PC-9 (cell line): ENCODE measurements at regions of chr15 and their contacts with region 1.

Region 1: GRCh38 chr15:96330450-96331145 is at the start of gene NR2F2:
- DNase-seq: peak; percentile 93
- H3K4me3 ChIP-seq: peak within 1 kb of the TSS; percentile 90
- H3K27ac ChIP-seq: peak within 1 kb of the TSS; percentile 91
- H3K4me1 ChIP-seq: peaks cover 36% of the 10 kb centered on the region
- H3K27me3 ChIP-seq: no peaks in the 10 kb centered on the region
- CTCF ChIP-seq: no peak
- total RNA-seq, gene NR2F2: 48.4 and 72.1 TPM in 2 replicates

Region 2: DNA sequence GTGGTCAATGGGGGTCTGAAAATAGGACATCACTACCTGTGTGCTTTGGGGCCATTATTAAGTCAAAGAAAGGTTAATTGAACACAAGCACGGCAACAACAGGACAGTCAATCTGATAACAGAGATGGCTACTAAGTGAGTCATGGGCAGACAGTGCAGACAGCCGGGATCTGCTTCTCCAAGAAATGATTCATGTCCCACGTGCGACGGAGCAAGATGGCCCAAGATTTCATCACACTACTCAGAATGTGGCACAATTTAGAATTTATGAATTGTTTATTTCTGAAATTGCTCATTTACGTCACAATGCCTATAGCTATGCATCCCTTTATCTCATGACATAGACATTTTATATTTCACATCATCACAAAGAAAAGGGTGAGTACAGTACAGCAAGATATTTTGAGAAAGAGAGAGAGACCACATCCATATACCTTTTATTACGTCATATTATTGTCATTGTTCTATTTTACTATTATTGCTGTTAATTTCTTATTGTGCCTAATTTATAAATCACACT is 770.7 kb before region 1 on chr15:
- CTCF ChIA-PET with region 1: interaction called, 4 read pairs
- POLR2A ChIA-PET with region 1: no interaction called
- intact Hi-C with region 1: loop called (anchors 5 kb)
- DNase-seq: peak; percentile 28 to 69
- H3K4me3 ChIP-seq: no peak overlapping the region
- H3K27ac ChIP-seq: peak overlapping the region; percentile 82
- H3K4me1 ChIP-seq: peaks cover 38% of the 10 kb centered on the region
- H3K27me3 ChIP-seq: no peaks in the 10 kb centered on the region
- CTCF ChIP-seq: no peak

Region 3: DNA sequence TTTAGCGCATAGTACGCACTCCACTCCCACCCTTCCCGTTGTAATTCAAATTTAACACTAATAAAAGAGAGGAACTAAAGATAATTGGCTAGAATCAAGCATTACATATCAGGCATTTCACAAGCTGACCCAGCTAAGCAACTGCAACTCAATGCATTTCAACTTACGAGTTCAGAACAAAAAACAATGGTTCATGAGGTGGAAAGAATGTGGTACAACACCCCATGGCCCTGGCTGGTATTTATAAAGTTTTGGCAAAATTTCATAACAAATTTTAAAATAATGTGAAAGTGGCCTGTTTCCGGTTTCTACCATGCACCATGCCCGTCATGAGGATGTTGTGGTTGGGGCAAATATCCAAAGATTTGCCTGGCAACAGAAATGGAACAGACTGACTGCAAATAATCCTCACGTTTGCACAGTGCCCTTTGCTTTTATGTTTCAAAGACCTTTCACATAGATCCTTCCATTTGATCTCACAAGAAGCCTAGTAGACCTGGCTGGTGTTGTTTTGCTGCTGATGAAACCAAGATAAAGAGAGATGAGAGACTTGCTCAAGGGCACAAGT is 455.4 kb before region 1 on chr15:
- CTCF ChIA-PET with region 1: interaction called, 6 read pairs
- POLR2A ChIA-PET with region 1: interaction called, 23 read pairs
- intact Hi-C with region 1: loop called (anchors 1 kb)
- DNase-seq: peak; percentile 63 to 79
- H3K4me3 ChIP-seq: no peak overlapping the region
- H3K27ac ChIP-seq: peak overlapping the region; percentile 25
- H3K4me1 ChIP-seq: peaks cover 37% of the 10 kb centered on the region
- H3K27me3 ChIP-seq: no peaks in the 10 kb centered on the region
- CTCF ChIP-seq: no peak

Region 4: GRCh38 chr15:96070626-96071025 is 260.0 kb before region 1 on chr15:
- CTCF ChIA-PET with region 1: no interaction called
- POLR2A ChIA-PET with region 1: interaction called, 3 read pairs
- intact Hi-C with region 1: loop called (anchors 1 kb)
- DNase-seq: peak; percentile 40 to 58
- H3K4me3 ChIP-seq: no peak overlapping the region
- H3K27ac ChIP-seq: no peak overlapping the region
- H3K4me1 ChIP-seq: no peaks in the 10 kb centered on the region
- H3K27me3 ChIP-seq: no peaks in the 10 kb centered on the region
- CTCF ChIP-seq: no peak

Region 5: GRCh38 chr15:96234109-96234892 is 96.3 kb before region 1 on chr15:
- CTCF ChIA-PET with region 1: no interaction called
- POLR2A ChIA-PET with region 1: interaction called, 11 read pairs
- intact Hi-C with region 1: no loop called
- DNase-seq: peak in 1 of 2 experiments; percentile 42
- H3K4me3 ChIP-seq: no peak overlapping the region
- H3K27ac ChIP-seq: no peak overlapping the region
- H3K4me1 ChIP-seq: peaks cover 11% of the 10 kb centered on the region
- H3K27me3 ChIP-seq: no peaks in the 10 kb centered on the region
- CTCF ChIP-seq: no peak